Activated T-helper 1 cell treated with anti-CD3 and anti-CD28 coated beads, Interleukin-12 subunit alpha, Interleukin-12 subunit beta, Interleukin-2, Interleukin-4 antibody, amounts not matched to agents 30 ng/mL and 10 ng/mL and 1 ng/mL, durations not matched to agents 14 hours and 24 hours and 36 hours (primary cell): ENCODE measurements at regions of chr18 and their contacts with region 1.

Region 1: GRCh38 chr18:34857320-34857719 is 147.2 kb downstream of the DTNA start:
- DNase-seq: no peak
- H3K4me3 Mint-ChIP-seq: no peak overlapping the region
- H3K27ac Mint-ChIP-seq: no peak overlapping the region
- H3K4me1 Mint-ChIP-seq: peaks cover 7% of the 10 kb centered on the region
- H3K27me3 Mint-ChIP-seq: peaks cover 43% of the 10 kb centered on the region

Region 2: DNA sequence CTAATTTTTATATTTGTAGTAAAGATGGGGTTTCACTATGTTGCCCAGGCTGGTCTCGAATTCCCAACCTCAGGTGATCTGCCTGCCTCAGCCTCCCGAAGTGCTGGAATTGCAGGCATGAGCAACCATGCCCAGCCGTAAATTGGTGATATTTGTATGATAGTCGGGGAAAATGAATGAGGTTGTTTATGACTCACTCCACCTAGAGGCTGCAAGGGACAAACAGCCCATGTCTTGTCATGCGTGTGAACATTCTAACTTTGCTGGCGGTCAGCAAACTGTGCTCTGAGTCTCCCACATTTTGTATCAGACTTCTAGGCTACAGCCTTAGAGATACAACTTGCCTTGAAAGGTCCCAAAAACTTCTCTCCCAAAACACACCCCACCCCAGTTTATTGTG is 280.7 kb before region 1 on chr18:
- intact Hi-C with region 1: no loop called
- DNase-seq: no peak
- H3K4me3 Mint-ChIP-seq: no peak overlapping the region
- H3K27ac Mint-ChIP-seq: no peak overlapping the region
- H3K4me1 Mint-ChIP-seq: no peaks in the 10 kb centered on the region
- H3K27me3 Mint-ChIP-seq: no peaks in the 10 kb centered on the region

Region 3: GRCh38 chr18:34834897-34835296 is 22.4 kb before region 1 on chr18:
- intact Hi-C with region 1: loop called (anchors 1 kb)
- DNase-seq: no peak
- H3K4me3 Mint-ChIP-seq: no peak overlapping the region
- H3K27ac Mint-ChIP-seq: peak overlapping the region; percentile 4
- H3K4me1 Mint-ChIP-seq: peaks cover 14% of the 10 kb centered on the region
- H3K27me3 Mint-ChIP-seq: no peaks in the 10 kb centered on the region

Region 4: GRCh38 chr18:35158728-35159450 is 301.6 kb after region 1 on chr18:
- intact Hi-C with region 1: loop called (anchors 1 kb)
- DNase-seq: peak; percentile 17
- H3K4me3 Mint-ChIP-seq: no peak overlapping the region
- H3K27ac Mint-ChIP-seq: peak overlapping the region; percentile 89
- H3K4me1 Mint-ChIP-seq: peaks cover 29% of the 10 kb centered on the region
- H3K27me3 Mint-ChIP-seq: no peaks in the 10 kb centered on the region

Region 5: GRCh38 chr18:35192415-35192814 is 335.1 kb after region 1 on chr18:
- intact Hi-C with region 1: no loop called
- DNase-seq: no peak
- H3K4me3 Mint-ChIP-seq: no peak overlapping the region
- H3K27ac Mint-ChIP-seq: no peak overlapping the region
- H3K4me1 Mint-ChIP-seq: peaks cover 5% of the 10 kb centered on the region
- H3K27me3 Mint-ChIP-seq: no peaks in the 10 kb centered on the region

Region 6: DNA sequence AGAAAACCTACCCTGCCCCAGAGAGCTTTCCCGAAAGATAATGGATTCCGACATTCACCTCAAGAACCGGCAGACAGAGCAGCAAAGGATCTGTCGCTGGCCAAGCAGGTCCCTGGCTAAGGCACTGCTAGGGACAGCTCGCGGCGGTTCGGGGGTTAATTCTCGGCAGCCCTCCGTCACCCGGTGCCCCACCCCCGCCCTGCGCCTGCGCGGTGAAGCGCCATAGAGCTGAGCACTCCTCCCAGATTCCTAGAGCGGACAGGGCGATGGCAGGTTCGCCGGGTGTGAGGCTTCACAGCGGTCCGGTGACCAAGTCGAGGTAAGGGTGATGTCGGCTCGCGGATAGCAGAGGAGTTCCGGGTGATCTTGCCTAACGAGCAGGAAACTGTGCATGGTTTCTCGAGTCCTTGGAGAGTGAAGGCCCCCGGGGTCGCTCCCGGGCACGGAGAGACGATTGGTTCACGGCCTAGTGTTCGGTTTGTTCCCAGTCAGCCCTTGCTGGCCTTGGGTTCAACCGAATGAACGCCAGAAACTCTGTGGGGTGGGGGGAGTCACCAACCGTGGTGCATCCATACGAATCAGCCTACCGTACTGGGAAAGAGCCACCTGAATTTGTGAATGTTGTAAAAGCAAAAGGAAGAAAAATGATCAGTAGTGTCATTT is 432.9 kb after region 1 on chr18 and contains the start of gene ZSCAN30:
- intact Hi-C with region 1: loop called (anchors 1 kb)
- DNase-seq: peak; percentile 94
- H3K4me3 Mint-ChIP-seq: peak within 1 kb of the TSS; percentile 100
- H3K27ac Mint-ChIP-seq: peak within 1 kb of the TSS; percentile 99
- H3K4me1 Mint-ChIP-seq: peaks cover 49% of the 10 kb centered on the region
- H3K27me3 Mint-ChIP-seq: no peaks in the 10 kb centered on the region
- total RNA-seq, gene ZSCAN30: 10.2 and 11.0 TPM in 2 replicates